ENCODE measurements at regions of chr1 and their contacts with region 1.

Region 1: DNA sequence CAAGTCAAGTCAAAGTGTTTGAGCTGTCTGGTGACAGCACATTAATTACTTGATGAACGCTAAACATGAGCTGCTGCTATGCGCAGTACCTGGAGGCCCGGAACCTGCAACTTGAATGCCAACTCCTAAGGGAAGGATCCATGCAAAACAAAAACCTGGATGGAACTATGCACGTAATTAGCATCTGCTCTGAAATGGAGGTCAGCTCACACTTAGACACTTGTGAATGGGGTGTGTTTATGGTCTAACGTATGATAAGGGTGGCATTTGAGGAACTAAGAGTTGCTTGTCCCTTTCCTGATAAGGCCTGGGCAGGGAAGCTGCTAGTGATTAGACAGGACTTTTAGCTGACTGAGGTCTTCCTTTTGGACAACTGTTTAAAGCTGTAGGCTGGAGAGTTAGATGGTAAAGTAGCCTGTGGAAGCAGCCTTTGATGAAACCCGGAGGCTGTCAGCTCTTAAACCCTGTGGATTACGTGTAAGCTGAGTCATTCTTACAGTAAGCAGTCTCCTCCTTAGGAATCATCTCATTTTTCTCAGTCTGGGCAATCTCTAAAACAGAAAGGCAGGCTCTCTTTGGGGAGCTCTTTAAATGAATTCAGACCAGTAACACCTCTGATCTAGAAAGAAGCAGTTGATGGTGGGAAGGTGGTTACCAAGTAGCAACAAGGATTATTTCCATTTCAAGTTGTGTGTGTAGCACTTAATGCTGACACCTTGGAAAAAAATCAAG is 6.8 kb downstream of the TENT5C start:
- DNase-seq: peak; percentile 34 to 59
- H3K4me3 ChIP-seq: no peak overlapping the region
- H3K27ac ChIP-seq: peak overlapping the region; percentile 8; the same call in 1 of the 2 replicates
- H3K4me1 ChIP-seq: peaks cover 18% of the 10 kb centered on the region
- H3K27me3 ChIP-seq: no peaks in the 10 kb centered on the region
- CTCF ChIP-seq: no peak

Region 2: GRCh38 chr1:117658676-117659075 is 46.0 kb after region 1 on chr1:
- CTCF ChIA-PET with region 1: no interaction called
- POLR2A ChIA-PET with region 1: no interaction called
- intact Hi-C with region 1: no loop called
- DNase-seq: no peak
- H3K4me3 ChIP-seq: no peak overlapping the region
- H3K27ac ChIP-seq: no peak overlapping the region
- H3K4me1 ChIP-seq: peaks cover 34% of the 10 kb centered on the region
- H3K27me3 ChIP-seq: no peaks in the 10 kb centered on the region
- CTCF ChIP-seq: no peak

Region 3: GRCh38 chr1:117886101-117886795 is 273.6 kb after region 1 on chr1:
- CTCF ChIA-PET with region 1: no interaction called
- POLR2A ChIA-PET with region 1: no interaction called
- intact Hi-C with region 1: loop called (anchors 10 kb)
- DNase-seq: no peak
- H3K4me3 ChIP-seq: no peak overlapping the region
- H3K27ac ChIP-seq: peak overlapping the region; percentile 24
- H3K4me1 ChIP-seq: 0 out of 2 replicates have a peak, but pooled peaks cover 4% of the 10 kb centered on the region
- H3K27me3 ChIP-seq: no peaks in the 10 kb centered on the region
- CTCF ChIP-seq: no peak

Measured in PC-9 (cell line).